Lower leg skin (tissue), 4 donors: ENCODE measurements at regions of chr6 and their contacts with region 1.

Region 1: GRCh38 chr6:36196880-36197548 is 470 bp downstream of the BRPF3 start:
- DNase-seq: peak; percentile 97 to 100
- H3K4me3 ChIP-seq: peak overlapping the region; percentile 90
- CTCF ChIP-seq: no peak
- POLR2A ChIP-seq: peak in 1 of 2 donors; percentile 40

Region 2: DNA sequence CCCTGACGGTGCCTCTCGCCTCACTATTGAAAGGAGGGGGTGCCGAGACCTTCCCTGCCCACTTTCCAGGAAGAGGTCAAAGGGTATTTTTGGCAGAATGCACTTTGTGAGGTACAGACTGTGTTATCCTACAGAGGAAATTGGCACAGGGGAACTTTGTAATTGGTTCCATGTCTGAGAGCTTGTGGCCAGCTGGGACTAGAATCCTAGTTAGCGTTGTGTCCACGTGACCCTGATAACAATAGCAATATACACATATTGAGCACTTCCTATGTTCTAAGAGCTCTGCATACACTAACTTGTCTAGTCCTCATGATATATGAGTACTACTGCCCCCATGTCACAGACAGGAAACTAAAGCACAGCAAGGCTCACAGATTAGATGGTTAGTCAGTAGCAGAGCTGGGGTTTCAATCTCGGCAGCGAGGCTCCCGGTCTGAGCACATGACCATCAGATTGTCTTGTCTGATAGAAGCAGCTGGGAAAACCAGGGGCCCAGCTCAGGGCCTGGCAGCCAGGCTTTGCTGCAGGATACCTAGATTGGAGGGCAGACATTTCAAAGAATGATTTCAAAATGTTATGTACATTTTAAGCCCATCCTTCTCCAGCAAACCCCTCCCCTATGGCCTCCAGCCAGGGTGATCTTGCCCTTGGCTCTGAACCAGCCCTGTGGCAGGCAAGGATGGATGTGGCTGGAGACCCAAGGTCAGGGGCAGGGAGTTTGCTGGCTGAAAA is 65.3 kb before region 1 on chr6:
- intact Hi-C with region 1: loop called (anchors 10 kb)
- DNase-seq: peak in 1 of 2 donors; percentile 87
- H3K4me3 ChIP-seq: no peak overlapping the region
- CTCF ChIP-seq: no peak
- POLR2A ChIP-seq: no peak